BJ (cell line): ENCODE measurements at regions of chr22 and their contacts with region 1.

Region 1: GRCh38 chr22:40519284-40519947 is 117.1 kb downstream of the MRTFA start:
- DNase-seq: no peak
- H3K4me3 ChIP-seq: no peak overlapping the region
- H3K27me3 ChIP-seq: no peaks in the 10 kb centered on the region
- CTCF ChIP-seq: no peak

Region 2: GRCh38 chr22:40560551-40560950 is 41.1 kb after region 1 on chr22:
- CTCF ChIA-PET with region 1: no interaction called
- POLR2A ChIA-PET with region 1: no interaction called
- DNase-seq: peak; percentile 11
- H3K4me3 ChIP-seq: no peak overlapping the region
- H3K27me3 ChIP-seq: no peaks in the 10 kb centered on the region
- CTCF ChIP-seq: no peak

Region 3: GRCh38 chr22:40641269-40641668 is 121.9 kb after region 1 on chr22:
- CTCF ChIA-PET with region 1: interaction called, 65 read pairs
- POLR2A ChIA-PET with region 1: no interaction called
- DNase-seq: no peak
- H3K4me3 ChIP-seq: no peak overlapping the region
- H3K27me3 ChIP-seq: no peaks in the 10 kb centered on the region
- CTCF ChIP-seq: no peak